IMR-90 (cell line): ENCODE measurements at regions of chr4 and their contacts with region 1.

Region 1: GRCh38 chr4:128871948-128872347 is 62.4 kb downstream of the JADE1 start:
- DNase-seq: peak; percentile 99
- ATAC-seq: peak; percentile 95
- H3K4me3 ChIP-seq: no peak overlapping the region
- H3K27ac ChIP-seq: peak overlapping the region; percentile 96
- H3K4me1 ChIP-seq: peaks cover 12% of the 10 kb centered on the region
- H3K27me3 ChIP-seq: no peaks in the 10 kb centered on the region
- CTCF ChIP-seq: no peak
- POLR2A ChIP-seq: no peak
- RAD21 ChIP-seq: peak; percentile 9; the same call in 1 of the 2 replicates

Region 2: GRCh38 chr4:128818442-128818841 is 53.5 kb before region 1 on chr4:
- CTCF ChIA-PET with region 1: no interaction called
- POLR2A ChIA-PET with region 1: no interaction called
- dilution Hi-C with region 1: no loop called
- in situ Hi-C with region 1: no loop called
- intact Hi-C with region 1: no loop called
- DNase-seq: no peak
- ATAC-seq: no peak
- H3K4me3 ChIP-seq: no peak overlapping the region
- H3K27ac ChIP-seq: no peak overlapping the region
- H3K4me1 ChIP-seq: peaks cover 10% of the 10 kb centered on the region
- H3K27me3 ChIP-seq: no peaks in the 10 kb centered on the region
- CTCF ChIP-seq: no peak
- POLR2A ChIP-seq: no peak
- RAD21 ChIP-seq: no peak

Region 3: DNA sequence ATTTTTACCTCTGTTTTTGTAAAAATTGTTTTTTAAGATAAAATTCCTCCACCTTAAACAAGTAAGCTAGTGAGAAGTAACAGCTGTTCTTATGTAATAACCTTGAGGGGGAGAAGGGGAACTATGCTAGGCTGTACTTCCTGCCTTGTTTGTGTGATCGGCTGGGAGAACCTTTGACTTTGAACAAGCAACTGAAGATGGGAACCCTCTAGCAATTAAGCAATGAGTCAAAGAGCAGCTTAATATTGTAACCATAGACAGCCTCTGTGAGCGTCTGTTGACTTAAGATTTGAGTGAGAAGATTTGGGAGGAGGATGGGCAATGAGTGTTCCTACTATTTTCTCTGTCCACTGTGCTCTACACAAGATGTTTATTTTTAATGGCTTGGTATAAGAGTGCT is 86.3 kb after region 1 on chr4:
- CTCF ChIA-PET with region 1: no interaction called
- POLR2A ChIA-PET with region 1: no interaction called
- dilution Hi-C with region 1: no loop called
- in situ Hi-C with region 1: no loop called
- intact Hi-C with region 1: no loop called
- DNase-seq: peak; percentile 6
- ATAC-seq: no peak
- H3K4me3 ChIP-seq: no peak overlapping the region
- H3K27ac ChIP-seq: no peak overlapping the region
- H3K4me1 ChIP-seq: no peaks in the 10 kb centered on the region
- H3K27me3 ChIP-seq: no peaks in the 10 kb centered on the region
- CTCF ChIP-seq: no peak
- POLR2A ChIP-seq: no peak
- RAD21 ChIP-seq: no peak

Region 4: DNA sequence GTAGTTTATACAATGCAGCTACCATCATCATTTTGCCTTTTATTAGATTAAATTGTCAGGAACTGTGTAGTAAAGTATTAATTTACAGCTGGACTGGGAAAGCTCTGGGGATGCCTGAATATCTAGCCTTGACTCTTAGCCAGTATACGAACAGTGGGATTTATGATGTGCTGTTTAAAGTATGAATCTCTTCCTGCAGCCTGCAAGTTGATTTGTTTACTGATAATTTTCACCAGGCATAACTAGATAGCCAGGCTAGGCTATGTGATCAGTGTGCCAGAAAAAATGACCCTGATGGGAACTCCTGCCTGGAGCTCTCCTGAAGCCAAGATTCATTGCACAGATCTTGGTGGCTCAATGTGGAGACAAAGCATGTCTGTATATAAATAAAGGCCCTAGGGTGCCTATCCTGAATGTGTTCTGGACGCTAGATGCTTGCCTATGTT is 102.2 kb after region 1 on chr4:
- CTCF ChIA-PET with region 1: no interaction called
- POLR2A ChIA-PET with region 1: no interaction called
- dilution Hi-C with region 1: no loop called
- in situ Hi-C with region 1: no loop called
- intact Hi-C with region 1: no loop called
- DNase-seq: peak; percentile 25
- ATAC-seq: peak; percentile 69
- H3K4me3 ChIP-seq: no peak overlapping the region
- H3K27ac ChIP-seq: no peak overlapping the region
- H3K4me1 ChIP-seq: peaks cover 4% of the 10 kb centered on the region
- H3K27me3 ChIP-seq: no peaks in the 10 kb centered on the region
- CTCF ChIP-seq: no peak
- POLR2A ChIP-seq: no peak
- RAD21 ChIP-seq: no peak

Region 5: GRCh38 chr4:129344058-129344457 is 472.1 kb after region 1 on chr4:
- CTCF ChIA-PET with region 1: no interaction called
- POLR2A ChIA-PET with region 1: no interaction called
- dilution Hi-C with region 1: no loop called
- in situ Hi-C with region 1: no loop called
- intact Hi-C with region 1: loop called (anchors 10 kb)
- DNase-seq: peak; percentile 27
- ATAC-seq: peak; percentile 35; the same call in 1 of the 2 replicates
- H3K4me3 ChIP-seq: no peak overlapping the region
- H3K27ac ChIP-seq: no peak overlapping the region
- H3K4me1 ChIP-seq: no peaks in the 10 kb centered on the region
- H3K27me3 ChIP-seq: no peaks in the 10 kb centered on the region; the same call in 1 of the 2 replicates
- CTCF ChIP-seq: peak; percentile 55
- POLR2A ChIP-seq: no peak
- RAD21 ChIP-seq: peak; percentile 45